Dorsolateral prefrontal cortex (tissue), 120 donors: ENCODE measurements at regions of chr17 and their contacts with region 1.

Region 1: DNA sequence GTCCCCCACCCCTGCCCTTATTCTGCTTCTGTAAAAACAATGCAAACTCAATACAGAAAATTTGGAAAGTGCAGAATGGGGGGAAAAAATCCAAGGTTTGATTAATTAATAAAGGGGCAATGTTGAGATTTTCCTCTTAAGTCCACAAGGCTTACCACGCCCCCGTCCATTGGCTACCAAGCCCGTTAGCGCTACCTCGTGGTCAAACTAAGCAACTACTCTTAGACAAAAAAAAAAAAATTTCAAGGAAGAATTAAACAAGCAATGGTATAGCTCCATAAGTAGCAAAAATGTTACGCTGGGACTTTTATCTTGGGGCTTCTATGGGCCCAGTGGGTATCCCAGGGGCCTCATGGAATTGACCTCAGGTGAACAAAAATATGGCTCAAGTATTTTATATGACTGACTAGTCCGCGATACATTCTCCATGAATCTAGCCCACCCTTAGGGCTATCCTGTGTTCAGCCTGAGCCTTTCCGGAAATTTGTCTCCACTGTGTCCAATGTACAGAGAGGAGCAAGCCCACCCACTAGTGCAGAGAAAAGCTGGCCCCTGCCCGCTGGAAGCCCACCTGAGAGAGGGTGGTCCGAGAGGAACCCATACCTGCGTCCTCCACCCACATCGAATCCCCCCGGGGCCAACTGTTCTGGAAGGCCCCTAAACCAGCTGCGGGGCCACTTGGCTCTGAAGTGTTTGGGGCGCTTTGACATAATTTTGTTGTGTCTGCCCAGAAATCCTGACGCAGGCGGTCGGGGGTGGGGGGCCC is 19.1 kb upstream of the TEX2 start:
- DNase-seq: peak in 7 of 10 donors; percentile 30 to 55 (median 46)
- H3K4me3 ChIP-seq: no peak overlapping the region
- H3K27ac ChIP-seq: peak overlapping the region in 2 of 59 donors; percentile 18 to 61
- H3K27me3 ChIP-seq: no peaks in the 10 kb centered on the region
- CTCF ChIP-seq: peak; percentile 64 to 94 (median 85)

Region 2: DNA sequence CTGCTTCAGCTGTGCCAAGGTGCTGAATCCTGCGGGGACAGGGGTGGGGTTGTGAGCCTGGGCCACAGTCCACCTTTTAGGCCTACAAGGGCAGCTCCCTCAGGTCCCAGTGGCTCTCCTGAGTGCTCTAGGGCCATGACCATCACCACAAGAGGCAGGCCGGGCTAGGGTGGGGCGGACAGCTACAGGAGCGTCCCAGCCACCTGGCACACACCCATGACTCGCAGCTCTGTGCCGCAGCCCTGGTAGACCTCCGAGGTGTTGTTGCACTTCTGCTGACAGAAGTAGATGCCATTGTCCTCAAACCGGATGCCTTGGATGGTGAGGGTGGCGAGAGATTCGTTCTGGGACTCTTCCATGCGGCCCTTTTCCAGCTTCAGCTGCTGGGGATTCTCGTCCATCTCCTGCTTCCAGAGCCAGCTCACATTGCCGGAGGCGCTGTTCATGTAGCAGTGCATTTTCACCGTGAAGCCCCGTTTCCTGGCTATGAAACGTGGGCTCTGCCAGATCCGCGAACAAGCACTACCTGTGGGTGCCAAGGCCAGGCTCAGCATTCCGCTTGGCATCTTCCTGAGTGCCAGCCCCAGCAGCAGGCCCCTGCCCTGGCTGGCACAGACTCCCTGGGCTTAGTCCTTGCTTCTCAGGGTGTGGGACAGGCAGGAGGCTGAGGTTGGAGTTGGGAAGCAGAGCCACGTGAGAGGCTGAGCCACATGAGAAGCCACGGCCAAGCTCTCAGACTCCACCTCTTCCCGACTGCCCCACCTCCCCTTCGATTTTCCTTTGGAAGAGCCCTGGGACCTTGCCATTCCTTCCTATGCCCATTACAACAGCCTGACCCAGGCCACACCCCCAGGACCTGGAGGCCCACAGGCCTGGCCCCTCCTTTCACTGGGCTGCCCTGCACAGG is 352.0 kb before region 1 on chr17:
- intact Hi-C with region 1: loop called in 1 of 2 experiments (anchors 10 kb)
- DNase-seq: peak in 1 of 10 donors; percentile 40
- H3K4me3 ChIP-seq: no peak overlapping the region
- H3K27ac ChIP-seq: no peak overlapping the region
- H3K27me3 ChIP-seq: no peaks in the 10 kb centered on the region
- CTCF ChIP-seq: no peak

Region 3: GRCh38 chr17:64025732-64026294 is 256.3 kb before region 1 on chr17:
- intact Hi-C with region 1: loop called (anchors 10 kb)
- DNase-seq: peak in 3 of 10 donors; percentile 33 to 48 (median 40)
- H3K4me3 ChIP-seq: peak overlapping the region in 21 of 59 donors; percentile 5 to 45 (median 26)
- H3K27ac ChIP-seq: peak overlapping the region in 1 of 59 donors; percentile 44
- H3K27me3 ChIP-seq: peaks cover 0 to 6% (median 0%) of the 10 kb centered on the region in 45 donors
- CTCF ChIP-seq: peak; percentile 61 to 94 (median 80)

Region 4: DNA sequence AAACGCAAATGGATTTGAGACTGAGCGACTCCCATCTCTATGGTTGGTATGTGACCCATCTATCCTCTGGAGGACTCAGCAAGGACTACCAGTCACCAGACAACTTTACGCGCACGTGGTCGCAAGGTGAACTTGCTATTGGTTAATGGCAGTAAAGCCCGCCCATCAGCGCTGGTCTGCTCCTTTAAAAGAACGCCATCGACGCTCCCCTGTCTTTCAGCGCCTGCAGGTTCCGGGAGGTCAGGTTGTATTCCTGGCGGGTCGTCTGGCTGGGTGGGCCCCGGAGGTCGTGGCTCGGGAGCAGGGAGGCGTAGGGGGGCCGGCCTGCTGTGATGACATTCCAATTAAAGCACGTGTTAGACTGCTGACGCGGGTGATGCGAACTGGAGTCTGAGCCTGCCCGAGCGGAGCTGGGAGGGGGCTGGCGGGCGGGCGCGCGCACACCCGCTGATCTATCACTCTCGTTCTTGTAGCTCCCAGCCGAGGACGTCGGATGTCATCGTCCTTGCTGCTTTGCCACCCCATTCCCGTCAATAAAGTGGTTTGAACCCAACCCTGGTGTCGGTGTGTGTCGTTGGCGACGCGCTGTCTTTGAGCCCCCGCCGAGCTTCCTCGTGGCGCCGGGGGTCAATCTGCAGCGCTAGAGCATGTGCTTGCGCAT is 136.3 kb before region 1 on chr17:
- intact Hi-C with region 1: loop called (anchors 1 to 2 kb)
- DNase-seq: peak; percentile 97 to 100 (median 99)
- H3K4me3 ChIP-seq: peak overlapping the region; percentile 52 to 98 (median 91)
- H3K27ac ChIP-seq: peak overlapping the region; percentile 86 to 99 (median 96)
- H3K27me3 ChIP-seq: no peaks in the 10 kb centered on the region
- CTCF ChIP-seq: peak in 42 of 56 donors; percentile 0 to 64 (median 34)

Region 5: GRCh38 chr17:64216338-64217248 is 65.6 kb before region 1 on chr17:
- intact Hi-C with region 1: loop called in 1 of 2 experiments (anchors 5 kb)
- DNase-seq: peak in 1 of 10 donors; percentile 23
- H3K4me3 ChIP-seq: no peak overlapping the region
- H3K27ac ChIP-seq: peak overlapping the region in 56 of 59 donors; percentile 3 to 86 (median 70)
- H3K27me3 ChIP-seq: no peaks in the 10 kb centered on the region
- CTCF ChIP-seq: peak in 5 of 56 donors; percentile 3 to 27 (median 6)

Region 6: GRCh38 chr17:64687961-64688360 is 405.8 kb after region 1 on chr17:
- intact Hi-C with region 1: no loop called
- DNase-seq: no peak
- H3K4me3 ChIP-seq: no peak overlapping the region
- H3K27ac ChIP-seq: no peak overlapping the region
- H3K27me3 ChIP-seq: no peaks in the 10 kb centered on the region
- CTCF ChIP-seq: no peak